Head of caudate nucleus (tissue), 42 donors: ENCODE measurements at regions of chr6 and their contacts with region 1.

Region 1: GRCh38 chr6:99425647-99426453 is 742 bp upstream of the PNISR start:
- DNase-seq: peak; percentile 74 to 94 (median 86)

Region 2: DNA sequence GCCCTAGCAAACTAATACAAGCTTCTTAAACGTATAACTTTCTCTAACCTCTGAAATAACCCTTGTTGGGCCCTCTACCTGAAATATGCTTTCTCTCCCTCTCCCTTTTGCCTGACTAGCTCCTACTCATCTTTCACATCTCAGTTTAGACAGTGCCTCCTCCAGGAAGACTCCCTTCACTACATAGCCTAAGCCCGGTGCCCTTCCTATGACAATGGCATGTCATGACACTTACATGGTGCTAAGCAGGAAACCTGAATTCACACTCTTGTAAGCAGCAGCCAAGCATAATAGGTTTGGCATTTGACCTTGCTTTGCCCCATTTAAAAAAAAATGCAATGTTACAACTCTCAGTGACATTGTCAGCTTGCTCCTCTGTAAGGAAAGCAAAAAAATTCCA is 445.0 kb before region 1 on chr6:
- intact Hi-C with region 1: no loop called
- DNase-seq: no peak

Region 3: DNA sequence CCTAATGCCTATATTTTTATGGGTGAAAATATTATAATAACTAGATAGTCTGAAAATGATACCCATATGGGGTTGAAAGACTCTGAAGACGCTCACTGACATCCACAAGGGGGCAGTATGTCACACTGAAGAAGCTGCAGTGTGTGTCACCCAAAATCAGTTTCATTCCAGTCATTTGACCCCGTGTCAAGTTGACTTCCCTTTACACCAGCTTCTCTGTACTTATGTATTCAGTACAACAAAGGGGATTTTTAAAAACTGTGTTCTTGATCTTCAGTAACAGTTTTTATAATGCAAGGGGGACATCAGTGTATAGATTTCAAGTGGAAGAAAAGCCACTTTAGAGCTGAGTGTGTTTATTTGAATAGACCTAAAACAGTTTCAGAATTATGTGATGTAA is 95.7 kb before region 1 on chr6:
- intact Hi-C with region 1: loop called (anchors 10 kb)
- DNase-seq: peak in 38 of 42 donors; percentile 18 to 87 (median 62)

Region 4: DNA sequence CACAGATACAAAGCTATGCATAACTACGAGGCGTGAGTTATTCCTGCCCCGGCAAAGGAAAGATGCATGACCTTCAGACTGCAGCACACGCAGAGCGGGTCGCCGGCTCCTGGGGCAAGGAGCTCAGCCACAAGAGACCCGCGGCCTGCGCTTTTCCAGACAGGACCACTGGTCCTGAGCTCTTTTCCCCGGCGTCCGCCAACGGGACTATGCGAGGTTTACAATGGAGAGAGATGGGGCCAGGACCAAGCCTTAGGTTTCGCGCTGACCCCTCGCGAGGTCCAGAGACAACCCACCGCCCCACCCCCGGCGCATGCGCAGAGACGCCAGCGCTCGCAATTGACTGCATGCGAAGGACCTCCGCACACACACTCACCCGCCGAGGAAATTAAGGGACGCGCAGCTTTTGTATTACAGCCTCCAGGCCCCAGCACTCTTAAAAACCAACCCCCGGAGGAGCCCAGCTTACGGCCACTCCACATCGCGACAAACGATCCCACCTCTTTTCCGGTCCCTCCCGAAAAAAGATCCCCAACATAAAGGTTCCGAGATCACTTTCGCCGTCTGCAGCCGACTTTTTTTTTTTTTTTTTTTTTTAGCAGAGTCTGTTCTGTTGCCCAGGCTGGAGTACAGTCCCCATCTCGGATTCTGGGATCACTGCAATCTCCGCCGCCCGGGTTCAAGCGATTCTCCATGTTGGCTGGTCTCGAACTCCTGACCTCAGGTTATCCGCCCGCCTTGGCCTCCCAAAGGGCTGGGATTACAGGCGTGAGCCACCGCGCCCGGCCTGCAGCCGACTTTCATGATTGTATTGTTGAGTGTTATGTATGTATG is 31.9 kb before region 1 on chr6 and contains the start of gene COQ3:
- intact Hi-C with region 1: loop called (anchors 2 kb)
- DNase-seq: peak; percentile 50 to 90 (median 76)

Region 5: GRCh38 chr6:99471638-99472037 is 45.8 kb after region 1 on chr6:
- intact Hi-C with region 1: no loop called
- DNase-seq: no peak

Region 6: DNA sequence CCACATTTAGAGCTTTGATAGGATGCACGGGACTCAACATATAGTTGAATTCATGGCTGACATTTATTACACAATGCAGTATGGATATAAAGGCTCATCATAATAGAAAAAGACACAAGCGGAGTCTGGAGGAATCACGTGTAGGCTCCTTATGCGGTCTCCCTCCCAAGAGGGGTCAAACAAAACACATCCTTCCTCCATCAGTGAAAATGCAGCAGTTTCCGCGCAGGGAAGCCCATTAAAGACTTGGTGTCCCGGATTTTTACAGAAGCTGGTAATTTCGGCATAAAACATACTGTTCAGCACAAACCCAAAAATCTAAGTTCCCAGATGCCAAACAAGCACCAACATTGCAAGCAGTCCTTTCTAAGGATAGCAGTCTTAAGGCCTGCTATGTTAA is 88.2 kb after region 1 on chr6:
- intact Hi-C with region 1: loop called (anchors 10 kb)
- DNase-seq: peak in 1 of 42 donors; percentile 11